ENCODE measurements at regions of chr1 and their contacts with region 1.

Region 1: DNA sequence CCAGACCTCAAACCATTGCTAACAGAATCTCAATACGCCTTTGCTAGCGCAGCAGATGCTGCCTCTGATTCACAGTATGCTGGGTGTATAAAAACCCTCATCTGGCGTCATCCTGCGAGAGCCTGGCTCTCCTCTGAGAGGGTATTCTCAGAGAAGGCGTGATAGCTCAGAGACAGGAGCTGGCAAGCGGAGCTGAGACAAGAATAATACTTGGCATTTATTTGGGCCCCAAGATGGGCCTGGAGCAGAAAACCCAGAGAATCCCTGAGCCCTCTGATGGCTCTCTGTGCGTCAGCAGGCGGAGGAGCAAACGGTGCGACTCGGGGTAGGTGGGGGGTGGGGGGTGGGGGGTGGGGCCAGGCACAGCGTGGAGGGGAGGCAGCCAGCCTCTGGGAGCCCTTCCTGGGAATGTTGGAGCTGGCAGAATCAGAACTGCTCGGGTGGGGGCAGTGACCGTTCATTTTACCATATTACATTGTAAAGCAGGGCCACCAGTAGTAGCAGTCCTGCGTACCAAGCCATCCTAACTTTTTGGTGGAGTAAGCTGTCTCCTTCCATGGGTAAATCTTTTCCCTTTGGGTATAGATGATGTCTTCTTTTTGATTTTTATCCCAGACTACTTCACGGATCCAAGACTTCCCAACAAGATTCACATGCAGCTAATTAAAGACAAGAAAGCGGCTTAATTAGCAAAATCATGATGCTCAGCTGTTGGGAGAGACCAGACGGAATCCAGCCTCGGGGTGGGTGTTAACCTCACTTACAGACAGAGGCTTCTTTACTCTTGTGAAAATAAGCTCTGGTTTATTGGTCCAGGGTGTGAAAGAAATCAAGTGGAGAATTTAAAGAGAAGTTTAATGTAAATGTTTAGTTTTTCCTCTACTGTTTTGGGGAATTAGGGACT is 7.1 kb downstream of the RIIAD1 start:
- DNase-seq: peak; percentile 34
- H3K4me3 ChIP-seq: peak overlapping the region; percentile 32
- CTCF ChIP-seq: no peak

Region 2: DNA sequence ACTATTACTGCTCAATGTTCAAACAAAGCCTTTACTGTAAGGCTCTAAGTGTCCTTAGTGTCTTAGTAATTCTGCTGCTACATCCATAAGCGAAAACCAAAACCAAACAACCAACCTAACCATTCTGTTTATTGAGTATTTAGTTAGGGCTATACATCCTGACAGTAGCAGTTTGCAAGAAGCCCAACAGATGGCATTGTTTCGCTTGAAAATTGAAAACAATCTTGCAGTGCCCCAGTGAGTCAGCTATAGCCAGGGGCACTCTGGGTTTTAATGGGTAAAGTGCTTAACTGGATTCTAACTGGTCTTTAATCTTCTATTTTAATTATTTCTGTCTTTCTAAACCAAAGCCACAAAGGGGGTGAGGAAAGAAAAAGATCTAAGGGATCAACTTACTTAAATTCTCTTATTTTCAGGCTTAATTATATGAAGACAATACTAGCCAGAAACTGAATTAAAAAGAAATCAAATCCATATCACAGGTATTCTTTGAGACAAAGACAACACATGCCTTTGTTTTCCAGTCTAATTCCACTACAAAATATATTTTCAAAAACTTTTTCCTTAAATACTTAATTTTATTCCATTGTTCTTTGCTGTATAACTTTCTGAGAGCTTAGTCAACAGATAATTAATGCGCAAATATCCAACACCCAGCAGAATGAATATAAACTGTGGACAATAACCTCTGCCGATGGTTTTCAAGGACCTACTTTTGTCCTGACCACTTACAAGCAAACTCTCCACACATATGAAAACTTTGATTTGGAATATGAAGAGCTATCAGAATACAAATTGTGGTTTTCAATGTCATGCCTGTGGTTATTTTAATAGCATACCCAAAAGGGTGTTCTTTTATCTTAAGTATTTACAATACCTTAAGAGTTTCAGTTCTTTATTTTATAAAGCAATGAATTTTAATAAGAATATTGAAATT is 284.3 kb before region 1 on chr1:
- CTCF ChIA-PET with region 1: interaction called, 20 read pairs
- POLR2A ChIA-PET with region 1: no interaction called
- DNase-seq: peak; percentile 52
- H3K4me3 ChIP-seq: no peak overlapping the region
- CTCF ChIP-seq: peak; percentile 69

Region 3: GRCh38 chr1:151534665-151535278 is 193.6 kb before region 1 on chr1:
- CTCF ChIA-PET with region 1: interaction called, 12 read pairs
- POLR2A ChIA-PET with region 1: no interaction called
- DNase-seq: no peak
- H3K4me3 ChIP-seq: no peak overlapping the region
- CTCF ChIP-seq: peak; percentile 94

Region 4: DNA sequence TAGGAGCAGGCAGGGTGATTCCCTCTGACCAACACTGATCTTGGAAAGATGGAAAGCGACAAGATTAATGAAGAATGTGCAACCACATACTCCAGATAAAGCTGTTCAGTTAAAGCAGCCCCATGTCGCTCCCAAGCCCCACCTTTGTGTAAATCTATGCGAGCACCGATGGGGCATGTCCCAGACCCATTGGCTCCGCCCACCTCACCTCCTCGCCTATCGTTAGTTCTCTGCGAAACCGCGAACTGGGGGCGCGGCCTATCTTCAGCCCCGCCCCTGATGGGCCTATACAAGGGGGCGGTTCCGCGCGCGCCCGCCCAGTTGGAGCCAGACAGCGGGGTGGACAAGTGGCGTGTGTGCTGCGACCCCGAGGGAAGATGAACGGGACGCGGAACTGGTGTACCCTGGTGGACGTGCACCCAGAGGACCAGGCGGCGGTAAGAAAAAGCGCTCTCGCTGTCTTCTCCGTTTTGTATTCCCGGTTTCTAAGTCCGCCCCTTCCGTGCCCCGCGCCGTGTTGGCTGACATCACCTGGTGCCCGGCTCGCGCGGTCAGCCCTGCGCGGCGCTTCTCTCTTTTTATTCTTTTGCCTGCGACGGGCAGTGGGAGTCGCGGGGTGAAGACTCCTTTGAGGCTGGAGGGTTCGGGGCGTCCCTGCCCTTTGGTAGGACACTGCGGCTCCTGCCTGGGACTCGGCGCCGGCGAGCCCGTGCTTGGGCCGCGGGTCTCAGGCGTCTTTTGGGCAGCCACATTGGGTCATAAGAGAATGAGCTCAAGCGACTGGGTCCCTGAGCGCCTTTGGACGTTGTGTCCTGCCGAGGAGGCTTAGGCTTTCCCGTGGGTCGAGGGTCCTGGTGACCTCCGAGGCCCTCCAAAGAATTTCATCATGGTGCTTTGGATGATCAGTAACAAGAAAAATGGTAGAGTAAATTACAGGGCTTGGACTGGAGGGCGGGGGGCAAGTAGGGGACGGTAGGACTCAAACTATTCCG is 188.1 kb before region 1 on chr1 and contains the start of gene TUFT1:
- CTCF ChIA-PET with region 1: interaction called, 18 read pairs
- POLR2A ChIA-PET with region 1: no interaction called
- DNase-seq: no peak
- H3K4me3 ChIP-seq: peak within 1 kb of the TSS; percentile 81
- CTCF ChIP-seq: no peak

Region 5: DNA sequence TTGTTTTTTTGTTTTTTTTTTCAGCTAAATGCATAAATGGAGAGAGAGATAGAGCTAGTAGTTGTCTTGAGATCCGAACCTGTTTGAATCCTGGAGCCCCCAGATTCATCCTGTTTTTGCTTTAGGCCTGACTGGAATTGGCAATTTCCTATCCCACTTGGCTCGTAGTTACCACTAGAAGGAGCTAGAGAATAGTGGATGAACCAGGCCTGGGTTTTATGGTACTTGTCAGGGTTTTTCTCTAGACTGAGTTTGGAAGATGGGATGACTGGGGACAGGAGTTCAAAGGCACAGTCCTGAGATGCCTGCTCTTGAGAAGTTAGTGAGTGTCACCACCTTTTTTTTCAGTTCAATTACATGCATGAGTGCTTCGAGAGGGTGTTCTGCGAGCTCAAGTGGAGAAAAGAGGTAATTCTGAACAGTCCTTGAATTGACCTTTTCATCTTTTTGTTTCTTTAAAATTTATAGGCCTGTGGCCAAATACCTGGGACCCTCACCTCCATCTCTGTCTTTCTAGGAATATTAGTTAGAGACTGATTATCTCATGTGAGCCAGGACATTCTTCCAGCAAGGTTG is 35.2 kb before region 1 on chr1:
- CTCF ChIA-PET with region 1: interaction called, 33 read pairs
- POLR2A ChIA-PET with region 1: no interaction called
- DNase-seq: no peak
- H3K4me3 ChIP-seq: no peak overlapping the region
- CTCF ChIP-seq: peak; percentile 65

Region 6: GRCh38 chr1:151739590-151740375 is 11.4 kb after region 1 on chr1:
- CTCF ChIA-PET with region 1: interaction called, 20 read pairs
- POLR2A ChIA-PET with region 1: no interaction called
- DNase-seq: no peak
- H3K4me3 ChIP-seq: no peak overlapping the region
- CTCF ChIP-seq: no peak